ENCODE measurements at regions of chr18 and their contacts with region 1.

Region 1: GRCh38 chr18:36711813-36712444 is 116.9 kb downstream of the TPGS2 start:
- DNase-seq: no peak
- ATAC-seq: no peak
- H3K4me3 Mint-ChIP-seq: no peak overlapping the region
- H3K27ac Mint-ChIP-seq: no peak overlapping the region
- H3K4me1 Mint-ChIP-seq: no peaks in the 10 kb centered on the region
- H3K27me3 Mint-ChIP-seq: peaks cover 6% of the 10 kb centered on the region

Region 2: GRCh38 chr18:36638224-36638623 is 73.7 kb before region 1 on chr18:
- CTCF ChIA-PET with region 1: no interaction called
- POLR2A ChIA-PET with region 1: no interaction called
- intact Hi-C with region 1: loop called in 1 of 2 experiments (anchors 10 kb)
- DNase-seq: no peak
- ATAC-seq: no peak
- H3K4me3 Mint-ChIP-seq: no peak overlapping the region
- H3K27ac Mint-ChIP-seq: no peak overlapping the region
- H3K4me1 Mint-ChIP-seq: no peaks in the 10 kb centered on the region
- H3K27me3 Mint-ChIP-seq: peaks cover 3% of the 10 kb centered on the region